ENCODE measurements at regions of chr10 and their contacts with region 1.

Region 1: DNA sequence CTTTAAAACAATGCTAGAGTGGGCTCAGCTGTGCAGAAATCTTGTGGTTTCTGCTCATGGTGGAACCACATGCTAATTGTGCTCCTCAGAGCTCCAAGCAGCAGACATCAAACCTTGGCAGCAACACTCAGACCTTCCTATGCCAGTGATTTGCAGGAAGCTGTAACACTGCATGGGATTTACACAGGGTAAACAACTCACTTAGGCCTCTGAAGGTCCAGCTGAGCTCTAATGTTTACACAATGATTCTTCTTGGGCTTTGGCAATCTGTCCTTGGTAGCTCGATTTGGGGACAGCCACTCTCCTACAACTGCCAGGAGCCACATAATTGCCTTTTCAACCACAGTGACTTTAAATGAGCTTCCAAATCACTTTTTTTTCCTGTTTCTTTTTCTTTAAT is 97.7 kb upstream of the PDLIM1 start:
- DNase-seq: no peak
- ATAC-seq: peak; percentile 40 to 46
- H3K4me3 ChIP-seq: no peak overlapping the region
- H3K27ac ChIP-seq: peak overlapping the region; percentile 11
- H3K4me1 ChIP-seq: peaks cover 12% of the 10 kb centered on the region
- H3K27me3 ChIP-seq: no peaks in the 10 kb centered on the region

Region 2: DNA sequence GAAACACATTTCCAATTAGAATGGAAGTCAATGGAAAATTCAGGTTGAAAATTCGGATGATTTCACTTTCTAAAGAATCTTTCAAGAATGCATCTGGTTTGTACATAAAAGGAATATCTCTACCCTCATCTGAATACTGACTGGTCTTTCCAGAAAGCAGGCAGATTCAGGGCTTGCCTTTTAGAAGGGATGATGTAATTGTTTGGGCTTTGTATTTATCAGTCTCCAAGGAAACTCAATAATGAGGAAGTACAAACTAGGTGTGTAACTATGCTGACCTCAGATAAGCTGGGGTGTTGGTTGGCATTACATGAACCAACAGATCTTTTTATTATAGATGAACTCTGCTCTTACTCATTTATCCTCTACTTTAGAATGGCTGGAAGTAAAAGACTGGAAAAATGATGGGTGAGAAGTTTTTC is 121.9 kb before region 1 on chr10:
- intact Hi-C with region 1: no loop called
- DNase-seq: no peak
- ATAC-seq: peak; percentile 75 to 84
- H3K4me3 ChIP-seq: no peak overlapping the region
- H3K27ac ChIP-seq: peak overlapping the region; percentile 79
- H3K4me1 ChIP-seq: peaks cover 23% of the 10 kb centered on the region
- H3K27me3 ChIP-seq: no peaks in the 10 kb centered on the region

Region 3: GRCh38 chr10:95374597-95375209 is 13.8 kb before region 1 on chr10:
- intact Hi-C with region 1: no loop called
- DNase-seq: peak; percentile 80 to 89 (median 86)
- ATAC-seq: peak; percentile 88 to 91
- H3K4me3 ChIP-seq: no peak overlapping the region
- H3K27ac ChIP-seq: no peak overlapping the region
- H3K4me1 ChIP-seq: peaks cover 6% of the 10 kb centered on the region
- H3K27me3 ChIP-seq: no peaks in the 10 kb centered on the region

Region 4: GRCh38 chr10:95423164-95424005 is 34.8 kb after region 1 on chr10:
- intact Hi-C with region 1: loop called in 1 of 4 experiments (anchors 5 kb)
- DNase-seq: no peak
- ATAC-seq: no peak
- H3K4me3 ChIP-seq: no peak overlapping the region
- H3K27ac ChIP-seq: peak overlapping the region; percentile 30
- H3K4me1 ChIP-seq: peaks cover 9% of the 10 kb centered on the region
- H3K27me3 ChIP-seq: no peaks in the 10 kb centered on the region

Measured in right cardiac atrium (tissue), 5 donors.